Heart right ventricle (tissue), 16 donors: ENCODE measurements at regions of chr3 and their contacts with region 1.

Region 1: DNA sequence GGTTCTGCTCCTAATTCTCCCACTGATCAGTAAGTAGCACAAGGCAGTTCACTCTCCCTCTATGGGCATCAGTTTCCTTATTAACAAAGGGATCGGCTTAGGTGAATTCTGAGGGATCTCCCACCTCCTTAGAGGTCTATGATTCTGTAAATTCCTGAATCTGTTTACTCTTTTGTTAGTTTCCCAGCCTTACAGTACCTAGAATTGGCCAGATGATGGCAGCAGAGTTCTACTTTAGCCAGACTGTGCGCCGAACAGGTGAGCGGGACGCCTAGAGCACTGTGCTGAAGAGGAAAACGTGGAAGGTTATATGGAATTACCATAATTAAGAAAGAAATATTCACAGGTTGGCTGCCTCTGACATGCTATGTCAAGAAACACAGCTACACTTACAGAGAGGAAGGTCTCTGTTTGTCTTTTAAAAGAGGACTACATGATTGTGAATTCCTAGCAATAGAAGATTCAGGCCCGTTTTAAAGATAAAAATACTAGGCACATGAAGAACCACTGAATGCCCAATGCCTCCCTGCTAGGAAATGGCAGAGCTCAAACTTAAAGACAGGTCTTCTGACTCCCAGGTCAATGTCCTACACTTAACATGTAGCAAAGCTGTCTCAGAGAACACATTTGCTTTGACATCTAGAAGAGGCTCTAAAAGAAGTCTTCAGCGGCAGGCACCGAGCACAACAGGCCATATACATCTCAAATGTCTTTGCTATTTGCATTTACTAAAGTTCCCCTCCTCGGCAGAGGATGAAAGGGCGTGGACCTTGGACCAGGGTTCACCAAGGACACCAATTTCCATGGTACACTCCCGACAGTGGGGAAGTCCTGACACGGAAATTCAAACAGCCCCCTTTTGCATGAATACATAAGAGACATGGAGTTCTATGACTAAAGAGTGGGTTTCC is 259.9 kb downstream of the FGF12 start:
- DNase-seq: peak; percentile 19 to 47
- ATAC-seq: peak; percentile 58 to 83 (median 78)
- H3K4me3 ChIP-seq: no peak overlapping the region
- H3K27ac ChIP-seq: peak overlapping the region in 1 of 10 donors; percentile 26
- H3K4me1 ChIP-seq: peaks cover 0 to 9% (median 5%) of the 10 kb centered on the region in 9 donors
- H3K27me3 ChIP-seq: peaks cover 0 to 11% (median 0%) of the 10 kb centered on the region in 7 donors
- CTCF ChIP-seq: peak; percentile 81 to 96 (median 91)

Region 2: GRCh38 chr3:192423003-192423349 is 44.5 kb before region 1 on chr3:
- intact Hi-C with region 1: no loop called
- DNase-seq: no peak
- ATAC-seq: no peak
- H3K4me3 ChIP-seq: no peak overlapping the region
- H3K27ac ChIP-seq: no peak overlapping the region
- H3K4me1 ChIP-seq: peaks cover 0 to 4% (median 0%) of the 10 kb centered on the region in 9 donors
- H3K27me3 ChIP-seq: no peaks in the 10 kb centered on the region
- CTCF ChIP-seq: peak in 8 of 9 donors; percentile 11 to 63 (median 32)

Region 3: GRCh38 chr3:192652727-192653126 is 185.2 kb after region 1 on chr3:
- intact Hi-C with region 1: no loop called
- DNase-seq: no peak
- ATAC-seq: no peak
- H3K4me3 ChIP-seq: no peak overlapping the region
- H3K27ac ChIP-seq: peak overlapping the region in 9 of 10 donors; percentile 32 to 74 (median 63)
- H3K4me1 ChIP-seq: peaks cover 0 to 14% (median 6%) of the 10 kb centered on the region in 9 donors
- H3K27me3 ChIP-seq: no peaks in the 10 kb centered on the region
- CTCF ChIP-seq: no peak

Region 4: GRCh38 chr3:192772240-192772894 is 304.9 kb after region 1 on chr3:
- intact Hi-C with region 1: loop called in 3 of 10 experiments (anchors 2 to 10 kb)
- DNase-seq: peak; percentile 42 to 44
- ATAC-seq: peak in 7 of 8 donors; percentile 67 to 94 (median 84)
- H3K4me3 ChIP-seq: no peak overlapping the region
- H3K27ac ChIP-seq: no peak overlapping the region
- H3K4me1 ChIP-seq: no peaks in the 10 kb centered on the region
- H3K27me3 ChIP-seq: no peaks in the 10 kb centered on the region
- CTCF ChIP-seq: peak; percentile 20 to 69 (median 56)

Region 5: DNA sequence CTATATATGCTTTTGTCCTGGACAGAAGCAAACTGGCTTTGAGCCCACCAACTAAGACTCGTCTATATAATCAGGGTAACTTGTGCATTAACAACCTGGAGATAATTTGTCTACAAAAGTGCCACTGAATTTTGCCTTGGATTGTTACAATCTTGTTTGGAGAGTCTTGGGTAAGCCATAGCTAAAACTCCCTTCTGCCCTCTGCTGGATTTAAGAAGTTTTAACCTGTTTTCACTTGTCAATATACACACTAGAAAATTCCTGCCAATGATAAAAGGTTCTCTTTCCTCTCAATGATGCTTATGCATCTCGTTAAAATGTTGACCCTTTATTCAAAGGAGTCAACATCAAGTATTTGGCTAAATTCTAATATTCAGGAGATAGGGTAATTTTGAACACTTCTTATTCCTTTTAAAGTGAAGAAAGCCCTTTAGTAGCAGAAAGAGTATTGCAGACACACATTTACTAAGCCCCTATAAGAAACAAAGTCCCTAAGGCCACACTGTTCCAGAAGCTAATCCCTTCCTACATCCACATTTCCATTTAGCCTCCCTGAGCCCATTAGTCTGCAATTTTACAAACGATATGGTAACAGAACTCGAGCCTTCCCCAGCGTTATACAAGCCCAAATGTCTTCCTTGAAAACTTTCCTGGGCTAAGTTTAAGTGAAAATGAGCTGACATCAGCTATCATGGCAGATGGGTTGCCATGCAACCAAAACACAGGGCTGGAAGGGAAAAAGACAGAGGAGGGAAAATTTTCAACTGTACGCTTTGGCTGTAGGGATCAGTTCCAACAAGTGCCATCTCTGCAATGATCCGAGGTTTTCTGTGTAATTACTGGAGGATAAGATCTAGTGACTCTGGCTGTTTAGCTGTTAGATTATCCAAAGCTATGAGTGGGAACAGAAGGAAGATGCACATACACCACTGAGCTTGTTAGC is 335.7 kb after region 1 on chr3:
- intact Hi-C with region 1: loop called (anchors 1 to 10 kb)
- DNase-seq: no peak
- ATAC-seq: peak in 6 of 8 donors; percentile 16 to 72 (median 56)
- H3K4me3 ChIP-seq: no peak overlapping the region
- H3K27ac ChIP-seq: no peak overlapping the region
- H3K4me1 ChIP-seq: peaks cover 0 to 8% (median 0%) of the 10 kb centered on the region in 9 donors
- H3K27me3 ChIP-seq: no peaks in the 10 kb centered on the region
- CTCF ChIP-seq: peak in 8 of 9 donors; percentile 37 to 76 (median 62)

Region 6: GRCh38 chr3:193572426-193572908 is 1105.0 kb after region 1 on chr3:
- intact Hi-C with region 1: loop called in 1 of 10 experiments (anchors 10 kb)
- DNase-seq: peak in 1 of 2 donors; percentile 49
- ATAC-seq: peak in 7 of 8 donors; percentile 38 to 76 (median 65)
- H3K4me3 ChIP-seq: no peak overlapping the region
- H3K27ac ChIP-seq: no peak overlapping the region
- H3K4me1 ChIP-seq: no peaks in the 10 kb centered on the region
- H3K27me3 ChIP-seq: peaks cover 0 to 3% (median 0%) of the 10 kb centered on the region in 7 donors
- CTCF ChIP-seq: peak; percentile 56 to 87 (median 78)